ENCODE measurements at regions of chr18 and their contacts with region 1.

Region 1: DNA sequence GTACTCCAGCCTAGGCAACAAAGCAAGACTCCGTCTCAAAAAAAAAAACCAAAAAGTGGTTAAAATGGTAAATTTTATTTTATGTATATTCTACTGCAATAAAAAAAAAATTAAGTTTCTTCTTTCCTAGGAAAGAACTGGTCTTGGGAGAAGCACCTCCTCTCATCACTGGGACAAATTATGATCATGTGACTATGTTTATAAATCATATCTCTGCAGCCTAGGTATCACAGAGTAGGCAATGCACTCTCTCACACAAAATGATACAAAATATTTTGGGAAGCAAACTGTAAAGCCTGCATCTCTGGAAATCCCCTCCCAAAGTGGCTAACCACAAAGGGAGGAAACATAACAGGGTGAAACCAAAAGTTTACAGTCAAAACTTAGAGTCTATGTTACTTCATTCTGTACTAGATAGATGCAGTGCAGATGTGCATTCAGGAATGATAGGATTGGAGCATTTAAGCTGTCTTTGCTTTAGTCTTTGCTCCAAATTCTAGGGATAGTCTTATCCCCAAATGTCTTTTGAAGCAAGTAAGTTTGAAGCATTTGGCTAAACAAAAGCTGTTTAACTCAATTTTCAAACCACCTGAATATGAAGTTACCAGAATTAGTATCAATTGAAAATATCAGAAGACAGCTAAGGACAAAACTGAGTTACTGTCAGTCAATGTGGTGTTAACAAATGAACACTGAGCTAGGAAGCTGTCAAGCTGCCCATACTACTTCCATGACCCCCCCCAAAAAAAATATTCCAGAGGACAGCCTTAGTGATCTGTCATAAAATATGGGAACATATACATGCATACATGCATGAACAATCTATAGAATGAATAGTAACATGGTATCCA is 21.1 kb upstream of the MALT1 start:
- DNase-seq: peak; percentile 92
- H3K4me3 Mint-ChIP-seq: peak overlapping the region; percentile 41
- H3K27ac Mint-ChIP-seq: peak overlapping the region; percentile 42
- H3K4me1 Mint-ChIP-seq: peaks cover 52% of the 10 kb centered on the region
- H3K27me3 Mint-ChIP-seq: peaks cover 3% of the 10 kb centered on the region

Region 2: DNA sequence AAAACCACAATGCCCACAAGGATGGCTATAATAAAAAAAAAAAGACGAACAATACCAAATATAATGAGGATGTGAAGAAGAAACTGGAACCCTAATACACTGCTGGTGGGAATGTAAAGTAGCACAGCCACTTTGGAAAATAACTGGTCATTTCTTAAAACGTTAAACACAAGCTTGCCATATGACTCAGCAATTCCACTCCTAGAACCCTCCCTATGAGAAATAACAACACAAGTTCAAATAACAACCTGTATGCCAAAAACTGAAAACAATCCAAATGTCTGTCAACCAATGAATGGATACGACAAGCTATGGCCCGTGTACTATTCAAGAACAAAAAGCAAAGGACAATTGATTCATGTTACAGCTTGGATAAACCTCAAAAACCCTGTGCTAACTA is 14.3 kb before region 1 on chr18:
- intact Hi-C with region 1: loop called (anchors 2 kb)
- DNase-seq: no peak
- H3K4me3 Mint-ChIP-seq: no peak overlapping the region
- H3K27ac Mint-ChIP-seq: peak overlapping the region; percentile 26
- H3K4me1 Mint-ChIP-seq: peaks cover 31% of the 10 kb centered on the region
- H3K27me3 Mint-ChIP-seq: peaks cover 11% of the 10 kb centered on the region

Region 3: GRCh38 chr18:58687871-58688308 is 37.7 kb after region 1 on chr18:
- intact Hi-C with region 1: loop called (anchors 5 kb)
- DNase-seq: peak; percentile 91
- H3K4me3 Mint-ChIP-seq: peak overlapping the region; percentile 51
- H3K27ac Mint-ChIP-seq: peak overlapping the region; percentile 92
- H3K4me1 Mint-ChIP-seq: peaks cover 57% of the 10 kb centered on the region
- H3K27me3 Mint-ChIP-seq: no peaks in the 10 kb centered on the region

Region 4: GRCh38 chr18:58699551-58699950 is 49.4 kb after region 1 on chr18:
- intact Hi-C with region 1: loop called (anchors 2 kb)
- DNase-seq: peak; percentile 49
- H3K4me3 Mint-ChIP-seq: no peak overlapping the region
- H3K27ac Mint-ChIP-seq: no peak overlapping the region
- H3K4me1 Mint-ChIP-seq: peaks cover 34% of the 10 kb centered on the region
- H3K27me3 Mint-ChIP-seq: no peaks in the 10 kb centered on the region